Dorsolateral prefrontal cortex (tissue), 120 donors: ENCODE measurements at regions of chr20 and their contacts with region 1.

Region 1: DNA sequence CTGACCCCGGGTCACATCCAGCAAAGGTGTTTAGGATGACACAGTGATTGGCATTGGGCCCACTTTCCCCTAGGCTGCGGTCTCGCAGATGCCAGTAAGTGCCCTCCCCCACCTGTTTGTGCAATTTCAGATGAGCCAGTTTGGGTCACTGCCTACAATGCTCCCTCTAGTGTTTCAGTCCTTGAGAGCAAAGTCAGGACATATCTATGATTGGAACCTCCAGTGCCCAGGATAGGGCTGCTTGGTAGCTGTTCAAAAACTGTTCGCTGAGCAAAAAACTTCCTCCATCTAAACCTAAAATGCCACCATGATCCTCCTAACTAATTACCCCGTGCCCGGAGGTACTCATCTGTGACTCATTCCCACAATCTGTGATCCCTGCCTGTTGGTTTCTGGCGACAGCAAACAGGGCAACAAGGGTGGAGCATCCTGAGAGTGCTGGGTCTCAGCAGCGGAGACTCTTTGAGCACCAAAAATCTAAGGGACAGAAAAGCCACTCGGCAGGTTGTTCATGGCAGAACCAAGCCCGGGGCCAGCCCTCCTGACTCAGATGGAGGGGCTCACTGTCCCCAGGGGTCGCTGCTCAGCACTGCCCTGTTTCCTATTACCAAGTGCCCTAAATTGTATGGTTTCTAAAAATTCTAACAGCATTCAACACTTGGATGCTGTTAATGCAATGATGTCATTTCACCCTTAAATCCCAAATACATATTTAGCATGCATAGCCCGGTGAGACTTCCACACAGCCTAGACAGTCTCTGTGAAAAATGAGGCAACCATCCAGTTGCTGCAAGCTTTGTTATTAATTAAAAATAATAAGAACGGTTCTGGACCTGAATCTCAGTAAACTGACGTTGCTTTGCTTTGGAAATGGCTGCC is 5.0 kb downstream of the VSX1 start:
- DNase-seq: peak in 2 of 10 donors; percentile 31 to 71
- H3K4me3 ChIP-seq: peak overlapping the region; percentile 33 to 80 (median 60)
- H3K27ac ChIP-seq: peak overlapping the region in 31 of 59 donors; percentile 0 to 90 (median 38)
- H3K27me3 ChIP-seq: peaks cover 0 to 67% (median 28%) of the 10 kb centered on the region in 45 donors
- CTCF ChIP-seq: peak in 43 of 56 donors; percentile 9 to 63 (median 43)

Region 2: DNA sequence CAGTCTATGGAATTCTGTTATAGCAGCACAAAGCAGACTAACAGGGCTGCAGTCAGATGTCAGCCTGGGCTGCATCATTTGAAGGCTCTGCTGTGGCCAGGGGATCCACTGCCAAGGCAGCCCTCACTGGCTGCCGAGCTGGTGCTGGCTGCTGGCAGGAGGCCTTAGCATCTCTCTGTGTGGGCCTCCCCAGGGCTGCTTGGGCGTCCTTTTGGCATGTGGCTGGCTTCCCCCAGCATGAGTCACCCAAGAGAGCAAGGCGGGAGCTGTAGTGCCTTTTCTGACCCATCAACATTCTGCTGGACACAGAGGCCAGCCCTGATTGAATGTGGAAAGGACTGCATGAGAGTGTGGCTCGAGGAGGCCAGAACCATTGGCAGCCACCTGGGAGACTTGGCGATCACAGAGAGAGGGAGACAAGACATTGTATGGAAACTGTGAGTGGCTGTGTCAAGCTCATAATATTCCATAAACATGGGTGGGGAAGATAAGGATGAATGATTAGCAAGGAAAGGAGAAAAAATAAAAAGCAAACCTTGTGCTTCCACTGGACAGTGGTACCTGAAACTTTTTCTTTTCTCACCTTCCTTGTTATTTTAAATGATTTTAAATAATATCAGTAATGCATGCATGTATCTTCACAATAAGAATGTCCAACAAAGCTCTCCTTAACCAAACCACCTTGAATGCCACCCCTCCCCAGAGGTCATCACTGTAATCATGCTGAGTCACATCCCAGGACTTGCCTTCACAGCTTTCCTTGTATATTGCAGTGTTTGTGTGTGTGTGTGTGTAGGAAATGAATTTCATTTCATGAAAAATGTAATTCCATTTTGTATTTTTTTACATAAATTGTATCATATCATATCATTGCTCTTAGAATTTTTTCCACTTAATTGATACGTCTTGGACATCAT is 59.9 kb after region 1 on chr20:
- intact Hi-C with region 1: loop called in 1 of 2 experiments (anchors 10 kb)
- DNase-seq: peak; percentile 52 to 90 (median 75)
- H3K4me3 ChIP-seq: no peak overlapping the region
- H3K27ac ChIP-seq: peak overlapping the region in 7 of 59 donors; percentile 14 to 57 (median 30)
- H3K27me3 ChIP-seq: peaks cover 0 to 9% (median 0%) of the 10 kb centered on the region in 45 donors
- CTCF ChIP-seq: no peak

Region 3: GRCh38 chr20:25178563-25179438 is 101.8 kb after region 1 on chr20:
- intact Hi-C with region 1: loop called in 1 of 2 experiments (anchors 5 kb)
- DNase-seq: no peak
- H3K4me3 ChIP-seq: no peak overlapping the region
- H3K27ac ChIP-seq: no peak overlapping the region
- H3K27me3 ChIP-seq: no peaks in the 10 kb centered on the region
- CTCF ChIP-seq: peak; percentile 29 to 85 (median 72)

Region 4: DNA sequence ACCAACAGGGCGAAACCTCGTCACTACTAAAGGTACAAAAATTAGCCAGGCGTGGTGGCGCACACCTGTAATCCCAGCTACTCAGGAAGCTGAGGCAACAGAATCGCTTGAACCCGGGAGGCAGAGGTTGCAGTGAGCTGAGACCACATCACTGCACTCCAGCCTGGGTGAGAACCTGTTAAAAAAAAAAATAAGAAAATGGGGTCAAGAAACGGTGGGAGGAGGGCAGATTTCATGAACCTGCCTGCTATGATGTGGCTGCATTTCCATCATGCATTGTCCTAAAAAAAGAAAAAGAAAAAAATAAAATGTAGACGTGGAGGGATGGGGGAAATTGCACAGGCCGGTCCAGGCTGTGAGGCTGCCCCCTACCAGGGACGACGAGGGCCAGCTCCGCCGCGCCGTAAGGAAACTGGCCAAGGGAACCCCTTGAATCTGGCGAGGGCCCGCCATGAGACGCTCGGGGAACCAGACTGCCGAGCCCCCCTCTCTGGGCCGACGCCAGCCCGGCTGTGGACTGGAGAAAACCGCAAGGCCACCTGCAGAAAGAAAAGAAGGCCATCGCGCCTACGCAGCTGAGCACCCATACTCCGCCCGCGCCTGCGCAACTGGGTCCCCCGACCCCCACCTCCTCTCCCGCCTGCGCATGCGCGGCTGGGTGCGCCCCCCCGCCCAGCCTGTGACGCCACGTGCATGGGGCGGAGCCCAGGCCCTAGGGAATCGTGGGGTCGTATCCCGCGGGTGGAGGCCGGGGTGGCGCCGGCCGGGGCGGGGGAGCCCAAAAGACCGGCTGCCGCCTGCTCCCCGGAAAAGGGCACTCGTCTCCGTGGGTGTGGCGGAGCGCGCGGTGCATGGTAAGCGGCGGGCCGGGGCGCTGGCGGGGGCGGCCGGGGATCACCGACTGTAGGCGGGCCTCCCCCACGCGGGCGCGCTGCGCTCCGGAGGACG is 118.3 kb after region 1 on chr20 and contains the start of gene ENTPD6:
- intact Hi-C with region 1: loop called in 1 of 2 experiments (anchors 5 kb)
- DNase-seq: peak; percentile 84 to 97 (median 90)
- H3K4me3 ChIP-seq: peak within 1 kb of the TSS; percentile 77 to 100 (median 95)
- H3K27ac ChIP-seq: peak within 1 kb of the TSS; percentile 79 to 100 (median 94)
- H3K27me3 ChIP-seq: no peaks in the 10 kb centered on the region
- CTCF ChIP-seq: peak in 51 of 56 donors; percentile 14 to 70 (median 44)
- total RNA-seq, gene ENTPD6: 90.8 to 200 (median 142) TPM

Region 5: DNA sequence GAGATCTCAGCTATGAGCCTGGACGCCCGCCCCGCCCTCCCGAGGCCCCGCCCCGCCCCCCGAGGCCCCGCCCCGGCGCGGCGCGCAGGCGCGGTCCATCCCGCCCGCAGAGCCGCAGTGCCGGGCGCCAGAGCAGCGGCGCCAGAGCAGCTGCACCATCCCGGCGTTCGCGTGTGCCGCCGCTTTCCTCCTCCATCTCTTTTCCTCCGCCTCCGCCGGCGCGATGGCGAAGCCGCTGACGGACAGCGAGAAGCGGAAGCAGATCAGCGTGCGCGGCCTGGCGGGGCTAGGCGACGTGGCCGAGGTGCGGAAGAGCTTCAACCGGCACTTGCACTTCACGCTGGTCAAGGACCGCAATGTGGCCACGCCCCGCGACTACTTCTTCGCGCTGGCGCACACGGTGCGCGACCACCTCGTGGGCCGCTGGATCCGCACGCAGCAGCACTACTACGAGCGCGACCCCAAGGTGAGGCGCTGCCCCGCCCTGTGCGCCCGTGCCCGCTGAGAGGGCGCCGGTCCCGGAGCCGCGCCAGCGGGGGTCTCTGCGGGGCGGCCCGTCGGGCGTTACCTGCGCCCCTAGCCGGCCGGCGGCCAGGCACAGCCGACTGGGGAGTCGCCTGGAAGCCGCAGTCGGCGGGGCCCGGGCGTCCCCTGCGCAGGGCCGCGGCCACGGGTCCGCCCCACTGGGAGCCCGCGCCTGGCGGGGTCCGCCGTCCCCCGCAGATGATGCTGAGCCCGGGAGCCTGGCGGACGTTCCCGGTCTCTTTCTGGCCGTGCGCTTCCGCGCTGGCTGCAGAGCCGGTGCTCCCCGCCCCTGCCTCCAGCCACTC is 171.2 kb after region 1 on chr20 and contains the start of gene PYGB:
- intact Hi-C with region 1: loop called in 1 of 2 experiments (anchors 5 kb)
- DNase-seq: peak; percentile 60 to 90 (median 77)
- H3K4me3 ChIP-seq: peak within 1 kb of the TSS; percentile 64 to 97 (median 88)
- H3K27ac ChIP-seq: peak within 1 kb of the TSS; percentile 63 to 98 (median 91)
- H3K27me3 ChIP-seq: no peaks in the 10 kb centered on the region
- CTCF ChIP-seq: peak in 11 of 56 donors; percentile 4 to 17 (median 8)
- total RNA-seq, gene PYGB: 83.2 to 226 (median 146) TPM